HAP-1 (cell line): ENCODE measurements at regions of chr12 and their contacts with region 1.

Region 1: GRCh38 chr12:63098851-63099250 is 52.1 kb downstream of the AVPR1A start:
- DNase-seq: peak in 1 of 2 experiments; percentile 52
- H3K4me3 ChIP-seq: no peak overlapping the region
- H3K4me1 ChIP-seq: no peaks in the 10 kb centered on the region
- H3K27me3 ChIP-seq: peaks cover 10% of the 10 kb centered on the region; the same call in 1 of the 2 replicates

Region 2: DNA sequence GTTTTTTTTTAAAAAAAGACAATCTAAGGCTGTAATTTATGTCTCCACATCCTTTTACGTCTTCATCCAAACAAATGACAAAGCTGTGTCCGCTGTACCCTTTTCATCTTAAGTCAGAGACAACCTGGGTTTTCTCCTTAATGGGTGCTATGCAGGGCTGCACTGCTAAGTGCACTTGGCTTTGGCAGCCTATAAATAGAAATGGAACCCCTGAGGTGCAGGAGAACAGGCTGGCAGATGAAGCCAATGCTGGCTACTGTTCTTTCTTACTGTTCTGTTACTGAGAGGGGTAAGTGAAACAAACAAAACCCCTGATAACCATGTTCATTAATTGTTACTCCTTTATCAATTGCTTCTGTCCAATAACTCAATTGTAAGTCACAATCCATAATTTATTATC is 1170.3 kb after region 1 on chr12:
- in situ Hi-C with region 1: no loop called
- DNase-seq: no peak
- H3K4me3 ChIP-seq: no peak overlapping the region
- H3K4me1 ChIP-seq: no peaks in the 10 kb centered on the region
- H3K27me3 ChIP-seq: peaks cover 2% of the 10 kb centered on the region; the same call in 1 of the 2 replicates

Region 3: GRCh38 chr12:64392221-64392620 is 1293.4 kb after region 1 on chr12:
- in situ Hi-C with region 1: loop called (anchors 25 kb)
- DNase-seq: peak in 1 of 2 experiments; percentile 30
- H3K4me3 ChIP-seq: no peak overlapping the region
- H3K4me1 ChIP-seq: no peaks in the 10 kb centered on the region
- H3K27me3 ChIP-seq: no peaks in the 10 kb centered on the region